ENCODE measurements at regions of chr1 and their contacts with region 1.

Region 1: DNA sequence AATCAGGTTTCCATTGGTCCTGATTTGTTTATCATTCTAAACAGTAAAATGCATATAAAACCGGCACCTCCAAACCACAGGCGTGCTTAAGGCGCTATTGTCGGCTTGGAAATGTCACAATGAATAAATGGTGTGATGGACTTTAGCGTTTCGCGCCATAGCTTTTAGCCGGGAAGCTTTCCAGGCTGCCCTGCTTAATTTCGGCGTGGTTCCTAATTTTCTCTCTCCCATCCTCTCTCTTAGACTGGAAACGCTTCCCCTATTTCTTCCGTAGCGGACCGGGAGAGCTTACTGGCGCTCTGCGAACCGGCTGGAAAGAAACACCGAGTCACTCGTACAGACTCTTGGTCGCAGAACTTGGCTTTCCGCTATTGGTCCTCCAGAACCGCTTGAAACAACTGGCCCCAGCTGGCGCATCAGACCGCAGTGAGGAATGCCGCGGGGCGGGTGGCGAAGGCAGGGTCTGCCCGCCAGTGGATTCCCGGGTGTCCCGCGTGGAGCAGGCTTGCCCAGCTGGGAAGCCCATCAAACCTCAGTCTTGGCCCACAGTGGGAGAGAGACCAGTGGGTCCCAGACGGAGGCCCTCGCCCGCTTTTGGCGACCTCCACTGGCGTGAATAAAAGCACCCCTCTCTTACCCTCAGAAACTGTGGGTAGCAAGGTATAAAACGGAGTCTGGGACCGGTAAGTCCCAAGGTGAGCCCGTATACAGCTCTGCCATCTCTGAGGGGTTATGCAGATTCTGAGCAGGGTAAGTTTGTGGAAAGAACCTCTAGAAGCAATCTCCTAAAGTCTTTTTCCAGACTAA is 4.0 kb upstream of the LHX8 start:
- DNase-seq: no peak
- H3K4me3 ChIP-seq: no peak overlapping the region
- H3K27ac ChIP-seq: no peak overlapping the region
- H3K4me1 ChIP-seq: peaks cover 0 to 9% (median 5%) of the 10 kb centered on the region in 4 donors
- H3K27me3 ChIP-seq: peaks cover 100% of the 10 kb centered on the region
- CTCF ChIP-seq: no peak
- EP300 ChIP-seq: no peak
- POLR2A ChIP-seq: no peak

Region 2: DNA sequence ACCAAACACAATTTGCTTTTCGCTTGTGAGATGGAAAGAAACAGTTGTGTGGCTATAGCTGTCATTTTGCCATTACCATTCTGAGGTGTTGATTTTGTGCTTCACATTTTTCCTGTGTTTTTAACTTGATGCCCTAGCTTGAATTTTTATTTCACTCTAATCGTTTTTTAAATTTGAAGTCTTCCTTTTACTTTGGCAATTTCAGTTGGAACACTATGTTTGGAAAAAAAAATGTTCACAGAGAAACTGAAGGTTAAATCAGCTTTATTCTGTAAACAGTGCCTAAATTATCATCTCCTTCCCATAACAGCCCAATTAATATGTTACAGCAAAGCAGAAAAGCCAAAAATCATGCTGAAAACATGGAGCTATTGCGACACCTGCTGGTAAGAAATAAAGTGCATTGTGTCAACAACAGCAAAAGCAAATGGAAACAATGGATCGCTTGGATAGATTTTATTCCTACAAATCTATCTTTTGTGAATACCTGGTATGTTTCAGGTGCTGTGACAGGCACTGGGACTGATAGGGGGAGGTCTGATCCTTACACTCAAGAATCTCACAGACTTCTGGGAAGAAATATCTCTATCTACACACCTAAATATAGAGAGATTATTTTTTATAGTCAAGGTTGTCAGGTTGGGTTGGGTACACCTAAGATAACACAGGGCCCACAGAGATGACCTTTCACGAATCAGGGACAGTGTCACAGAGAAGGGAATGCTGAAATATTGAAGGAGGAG is 440.4 kb before region 1 on chr1:
- in situ Hi-C with region 1: no loop called
- intact Hi-C with region 1: loop called (anchors 5 kb)
- DNase-seq: peak; percentile 15
- H3K4me3 ChIP-seq: no peak overlapping the region
- H3K27ac ChIP-seq: no peak overlapping the region
- H3K4me1 ChIP-seq: peaks cover 0 to 3% (median 0%) of the 10 kb centered on the region in 4 donors
- H3K27me3 ChIP-seq: no peaks in the 10 kb centered on the region
- CTCF ChIP-seq: peak; percentile 66 to 83 (median 79)
- EP300 ChIP-seq: no peak
- POLR2A ChIP-seq: no peak

Region 3: GRCh38 chr1:75529488-75529887 is 399.3 kb after region 1 on chr1:
- in situ Hi-C with region 1: no loop called
- intact Hi-C with region 1: no loop called
- DNase-seq: no peak
- H3K4me3 ChIP-seq: no peak overlapping the region
- H3K27ac ChIP-seq: no peak overlapping the region
- H3K4me1 ChIP-seq: no peaks in the 10 kb centered on the region
- H3K27me3 ChIP-seq: no peaks in the 10 kb centered on the region
- CTCF ChIP-seq: no peak
- EP300 ChIP-seq: no peak
- POLR2A ChIP-seq: no peak